HepG2 (cell line): ENCODE measurements at regions of chr17 and their contacts with region 1.

Region 1: GRCh38 chr17:21284319-21285163 is at the start of gene MAP2K3:
- DNase-seq: peak; percentile 97
- ATAC-seq: peak; percentile 70
- H3K4me3 ChIP-seq: peak within 1 kb of the TSS; percentile 82 to 96 (median 95)
- H3K27ac ChIP-seq: peak within 1 kb of the TSS; percentile 90
- H3K4me1 ChIP-seq: peaks cover 53% of the 10 kb centered on the region
- H3K27me3 ChIP-seq: peaks cover 2 to 19% of the 10 kb centered on the region in 2 experiments; a peak in 4 of 5 replicates
- CTCF ChIP-seq: 0 out of 2 replicates have a peak, but pooled peaks have one; percentile 11
- EP300 ChIP-seq: no peak
- POLR2A ChIP-seq: peak; percentile 93 to 99
- RAD21 ChIP-seq: peak; percentile 29
- total RNA-seq, gene MAP2K3: 20.5 and 39.8 TPM in 2 replicates

Region 2: GRCh38 chr17:20890338-20890737 is 394.2 kb before region 1 on chr17:
- CTCF ChIA-PET with region 1: no interaction called
- POLR2A ChIA-PET with region 1: no interaction called
- in situ Hi-C with region 1: no loop called
- intact Hi-C with region 1: no loop called
- DNase-seq: no peak
- ATAC-seq: no peak
- H3K4me3 ChIP-seq: no peak overlapping the region
- H3K27ac ChIP-seq: no peak overlapping the region
- H3K4me1 ChIP-seq: no peaks in the 10 kb centered on the region
- H3K27me3 ChIP-seq: no peaks in the 10 kb centered on the region
- CTCF ChIP-seq: no peak
- EP300 ChIP-seq: no peak
- POLR2A ChIP-seq: no peak
- RAD21 ChIP-seq: no peak

Region 3: GRCh38 chr17:21126645-21127510 is 157.7 kb before region 1 on chr17 and contains the start of gene DHRS7B:
- CTCF ChIA-PET with region 1: no interaction called
- POLR2A ChIA-PET with region 1: interaction called, 3 read pairs
- in situ Hi-C with region 1: loop called (anchors 10 kb)
- intact Hi-C with region 1: loop called (anchors 5 kb)
- DNase-seq: peak; percentile 95
- ATAC-seq: peak; percentile 93
- H3K4me3 ChIP-seq: peak within 1 kb of the TSS; percentile 69 to 92 (median 71)
- H3K27ac ChIP-seq: peak within 1 kb of the TSS; percentile 85
- H3K4me1 ChIP-seq: peaks cover 18% of the 10 kb centered on the region
- H3K27me3 ChIP-seq: no peaks in the 10 kb centered on the region
- CTCF ChIP-seq: 0 out of 2 replicates have a peak, but pooled peaks have one; percentile 24
- EP300 ChIP-seq: no peak
- POLR2A ChIP-seq: peak; percentile 73 to 76
- RAD21 ChIP-seq: 0 out of 2 replicates have a peak, but pooled peaks have one; percentile 22
- total RNA-seq, gene DHRS7B: 24.3 and 35.8 TPM in 2 replicates

Region 4: GRCh38 chr17:21252796-21253645 is 31.5 kb before region 1 on chr17 and contains the start of gene NATD1:
- CTCF ChIA-PET with region 1: interaction called, 3 read pairs
- POLR2A ChIA-PET with region 1: interaction called, 3 read pairs
- in situ Hi-C with region 1: no loop called
- intact Hi-C with region 1: loop called (anchors 5 kb)
- DNase-seq: peak; percentile 68
- ATAC-seq: peak; percentile 56
- H3K4me3 ChIP-seq: peak within 1 kb of the TSS; percentile 65 to 76 (median 75)
- H3K27ac ChIP-seq: no peak within 1 kb of the TSS
- H3K4me1 ChIP-seq: peaks cover 22% of the 10 kb centered on the region
- H3K27me3 ChIP-seq: peaks cover 3 to 34% of the 10 kb centered on the region in 2 experiments; a peak in 4 of 5 replicates
- CTCF ChIP-seq: 0 out of 2 replicates have a peak, but pooled peaks have one; percentile 12
- EP300 ChIP-seq: no peak
- POLR2A ChIP-seq: 0 out of 4 replicates have a peak, but pooled peaks of 1 of the 2 experiments have one; percentile 46
- RAD21 ChIP-seq: no peak
- total RNA-seq, gene NATD1: 0.31 and 0.45 TPM in 2 replicates

Region 5: GRCh38 chr17:21376759-21377690 is 92.5 kb after region 1 on chr17:
- CTCF ChIA-PET with region 1: no interaction called
- POLR2A ChIA-PET with region 1: no interaction called
- in situ Hi-C with region 1: no loop called
- intact Hi-C with region 1: no loop called
- DNase-seq: no peak
- ATAC-seq: peak; percentile 14; the same call in 1 of the 3 replicates
- H3K4me3 ChIP-seq: 0 out of 6 replicates have a peak overlapping the region, but pooled peaks of 1 of the 3 experiments have one; percentile 4
- H3K27ac ChIP-seq: no peak overlapping the region
- H3K4me1 ChIP-seq: no peaks in the 10 kb centered on the region
- H3K27me3 ChIP-seq: peaks cover 16 to 64% of the 10 kb centered on the region in 2 experiments
- CTCF ChIP-seq: no peak
- EP300 ChIP-seq: no peak
- POLR2A ChIP-seq: no peak
- RAD21 ChIP-seq: no peak

Region 6: GRCh38 chr17:21457051-21458026 is 172.8 kb after region 1 on chr17:
- CTCF ChIA-PET with region 1: no interaction called
- POLR2A ChIA-PET with region 1: no interaction called
- in situ Hi-C with region 1: loop called (anchors 10 kb)
- intact Hi-C with region 1: loop called (anchors 2 kb)
- DNase-seq: peak; percentile 67
- ATAC-seq: peak; percentile 91
- H3K4me3 ChIP-seq: no peak overlapping the region
- H3K27ac ChIP-seq: no peak overlapping the region
- H3K4me1 ChIP-seq: peaks cover 5% of the 10 kb centered on the region; the same call in 1 of the 2 replicates
- H3K27me3 ChIP-seq: peaks cover 1 to 18% of the 10 kb centered on the region in 2 experiments; a peak in 3 of 5 replicates
- CTCF ChIP-seq: peak; percentile 88
- EP300 ChIP-seq: no peak
- POLR2A ChIP-seq: no peak
- RAD21 ChIP-seq: peak; percentile 63